ENCODE measurements at regions of chr14 and their contacts with region 1.

Region 1: DNA sequence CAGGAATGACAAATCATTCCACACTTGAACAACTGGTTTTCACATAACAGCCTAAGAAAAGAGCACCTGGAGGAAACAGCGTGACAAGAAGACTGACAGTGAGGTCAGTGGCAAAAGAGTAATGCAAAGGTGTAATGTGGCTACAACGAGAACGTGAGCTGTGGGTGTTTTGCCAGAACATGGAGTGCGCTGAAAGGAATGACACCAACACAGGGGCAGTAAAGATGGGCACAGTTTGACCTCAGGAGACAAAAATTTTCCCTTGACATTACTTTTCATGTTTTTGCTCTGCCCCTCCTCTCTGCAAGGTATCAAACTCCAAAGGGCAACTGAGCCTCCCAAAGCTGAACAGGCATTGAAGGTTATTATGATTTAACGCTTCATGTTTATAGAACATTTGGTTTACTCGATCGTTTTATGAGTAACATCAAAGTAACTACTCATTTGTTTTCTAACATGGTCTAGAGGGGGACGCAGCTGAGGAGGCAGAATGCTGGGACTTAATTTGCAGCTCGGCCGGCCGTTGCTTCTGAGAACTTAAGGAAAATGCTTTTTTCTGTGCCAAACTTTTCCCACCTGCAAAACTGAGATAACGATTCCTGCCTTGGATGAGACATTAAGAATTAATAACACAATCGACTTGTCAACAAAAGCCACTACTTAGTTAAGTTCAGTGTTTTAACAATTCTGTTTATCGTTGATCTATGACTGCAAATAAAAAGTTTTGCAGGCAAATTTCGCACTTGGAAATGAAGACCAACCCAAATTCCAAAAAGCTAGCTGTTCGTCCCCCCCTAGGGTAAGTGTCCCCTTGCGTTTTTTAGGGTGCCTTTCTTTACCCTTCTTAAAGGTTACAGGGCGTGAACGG is 954 bp downstream of the HAUS4 start:
- DNase-seq: peak; percentile 57

Region 2: DNA sequence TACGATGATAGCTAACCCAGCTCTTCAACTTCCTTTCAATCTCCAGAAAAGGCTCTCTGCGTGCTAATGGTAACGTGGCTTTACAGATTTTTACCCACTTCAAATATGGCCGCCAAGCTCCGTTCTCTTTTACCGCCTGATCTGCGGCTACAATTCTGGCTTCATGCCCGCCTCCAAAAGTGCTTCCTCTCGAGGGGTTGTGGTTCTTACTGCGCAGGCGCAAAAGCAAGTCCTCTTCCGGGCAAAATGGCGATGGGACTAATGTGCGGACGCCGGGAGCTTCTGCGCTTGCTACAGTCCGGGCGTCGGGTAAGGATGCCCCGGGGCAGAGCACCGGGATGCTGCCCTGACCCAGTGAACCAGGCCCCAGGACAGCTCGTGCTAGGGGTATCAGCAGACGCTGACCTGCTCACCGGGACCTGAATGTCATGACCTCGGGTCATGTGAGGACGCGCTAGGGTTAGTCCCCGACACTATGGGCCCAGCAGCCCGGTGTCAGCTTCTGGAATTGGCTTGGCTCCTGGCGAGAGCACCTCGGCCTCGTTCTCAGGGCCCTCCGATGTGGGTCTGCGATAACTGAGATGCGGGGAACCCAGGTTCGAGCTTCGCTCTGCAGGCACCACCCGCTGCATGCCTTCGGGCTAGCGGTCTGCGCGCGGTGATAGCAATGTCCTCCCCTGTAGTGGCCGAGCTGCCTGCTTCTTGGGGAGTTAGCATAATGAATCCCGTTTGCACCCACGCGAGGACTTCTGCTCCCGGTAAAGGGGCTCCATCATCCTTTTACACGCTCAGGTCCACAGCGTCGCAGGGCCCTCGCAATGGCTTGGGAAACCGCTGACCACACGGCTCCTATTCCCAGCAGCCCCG is 189.2 kb before region 1 on chr14 and contains the start of gene OXA1L:
- intact Hi-C with region 1: no loop called
- DNase-seq: peak; percentile 98
- total RNA-seq, gene OXA1L: 111 TPM

Region 3: DNA sequence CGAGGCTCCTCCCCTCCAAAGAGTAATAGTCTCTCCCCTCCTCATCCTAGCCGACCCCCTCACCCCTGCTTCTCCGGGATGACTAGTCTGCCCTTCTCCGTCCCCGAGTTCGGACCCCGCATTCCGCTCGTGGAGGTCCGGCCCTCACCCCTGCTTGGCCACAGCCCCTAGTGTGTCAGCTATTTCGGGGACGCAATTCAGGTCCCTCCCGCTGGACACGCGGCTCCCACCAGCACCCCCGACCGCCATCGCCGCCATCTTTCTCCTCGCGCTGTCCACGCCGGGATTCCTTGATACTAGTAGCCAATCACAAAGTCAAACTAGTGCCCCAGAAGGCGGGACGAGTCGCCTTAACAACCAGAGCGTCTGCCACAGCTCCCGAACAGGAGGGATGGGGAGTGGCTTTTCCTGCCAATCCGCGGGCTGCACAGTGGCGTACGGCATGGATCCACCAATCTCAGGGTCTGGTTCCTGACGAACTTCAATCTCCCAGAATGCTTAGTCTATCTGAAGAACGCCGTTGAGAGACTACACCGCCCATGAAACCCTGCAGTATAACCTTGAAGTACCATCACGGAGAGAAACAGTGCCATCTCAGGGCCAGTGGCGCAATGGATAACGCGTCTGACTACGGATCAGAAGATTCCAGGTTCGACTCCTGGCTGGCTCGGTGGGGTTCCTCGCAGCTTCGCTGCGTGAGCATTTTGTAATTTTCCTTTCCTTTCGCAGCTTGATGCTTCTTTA is 26.7 kb before region 1 on chr14 and contains the start of gene PRMT5:
- intact Hi-C with region 1: loop called (anchors 1 kb)
- DNase-seq: peak; percentile 99
- total RNA-seq, gene PRMT5: 40.2 TPM